ENCODE measurements at regions of chr18 and their contacts with region 1.

Region 1: DNA sequence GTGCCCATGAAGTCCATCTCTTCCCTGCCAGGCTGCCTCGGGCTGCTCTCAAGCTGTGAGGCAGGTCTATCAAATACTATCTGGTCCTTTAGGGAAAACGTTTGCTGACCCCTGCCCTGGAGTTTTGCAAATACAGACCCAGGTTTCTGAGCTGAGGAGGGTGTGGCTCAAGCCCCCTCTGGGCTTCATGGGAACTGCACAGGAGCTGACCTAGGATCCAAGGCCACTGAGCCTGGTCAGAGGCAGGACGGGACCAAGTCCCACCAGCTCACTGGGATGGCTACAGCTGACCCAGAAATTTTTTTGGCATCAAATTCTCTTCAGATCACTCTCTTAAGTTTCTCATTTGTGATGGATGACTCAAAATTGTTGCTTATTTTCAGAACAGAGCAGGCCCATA is 14.1 kb downstream of the ZNF516 start:
- DNase-seq: peak in 2 of 7 donors; percentile 29 to 30
- H3K4me3 ChIP-seq: no peak overlapping the region
- H3K27ac ChIP-seq: no peak overlapping the region
- H3K4me1 ChIP-seq: peaks cover 13 to 38% of the 10 kb centered on the region in 2 donors
- H3K27me3 ChIP-seq: no peaks in the 10 kb centered on the region
- CTCF ChIP-seq: peak in 1 of 6 experiments; percentile 16
- POLR2A ChIP-seq: no peak

Region 2: DNA sequence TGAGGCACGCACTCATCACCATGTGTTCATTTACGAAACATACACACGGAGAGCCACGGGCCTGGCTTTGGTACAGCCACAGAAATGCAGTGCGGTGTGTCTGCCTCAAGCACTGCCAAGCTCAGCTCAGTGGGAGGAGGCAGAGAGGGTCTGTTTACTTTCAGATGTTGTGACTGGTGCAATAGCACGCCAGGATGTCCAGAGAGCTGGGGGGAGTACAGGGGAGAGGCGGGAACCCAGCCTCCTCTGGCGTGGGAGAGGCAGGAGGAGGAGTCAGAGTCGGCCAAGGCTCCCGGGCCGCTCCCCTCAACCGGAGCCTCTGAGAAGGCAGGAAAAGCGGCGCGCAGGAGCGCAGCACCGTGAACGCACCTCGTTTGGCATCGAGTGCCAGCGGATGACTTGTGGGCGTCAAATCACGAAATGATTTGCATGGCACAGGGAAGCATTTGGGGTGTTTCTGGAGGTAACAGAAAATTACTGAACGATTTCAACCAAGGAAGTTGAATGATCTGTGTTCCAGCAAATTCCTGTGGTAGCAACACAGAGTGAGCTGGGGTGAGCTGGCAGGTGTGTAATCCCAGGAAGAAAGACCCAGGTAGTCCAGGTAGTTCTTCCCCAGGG is 128.8 kb before region 1 on chr18:
- intact Hi-C with region 1: no loop called
- DNase-seq: peak in 2 of 7 donors; percentile 13 to 21
- H3K4me3 ChIP-seq: no peak overlapping the region
- H3K27ac ChIP-seq: no peak overlapping the region
- H3K4me1 ChIP-seq: peaks cover 0 to 5% of the 10 kb centered on the region in 2 donors
- H3K27me3 ChIP-seq: no peaks in the 10 kb centered on the region
- CTCF ChIP-seq: no peak
- POLR2A ChIP-seq: no peak

Region 3: DNA sequence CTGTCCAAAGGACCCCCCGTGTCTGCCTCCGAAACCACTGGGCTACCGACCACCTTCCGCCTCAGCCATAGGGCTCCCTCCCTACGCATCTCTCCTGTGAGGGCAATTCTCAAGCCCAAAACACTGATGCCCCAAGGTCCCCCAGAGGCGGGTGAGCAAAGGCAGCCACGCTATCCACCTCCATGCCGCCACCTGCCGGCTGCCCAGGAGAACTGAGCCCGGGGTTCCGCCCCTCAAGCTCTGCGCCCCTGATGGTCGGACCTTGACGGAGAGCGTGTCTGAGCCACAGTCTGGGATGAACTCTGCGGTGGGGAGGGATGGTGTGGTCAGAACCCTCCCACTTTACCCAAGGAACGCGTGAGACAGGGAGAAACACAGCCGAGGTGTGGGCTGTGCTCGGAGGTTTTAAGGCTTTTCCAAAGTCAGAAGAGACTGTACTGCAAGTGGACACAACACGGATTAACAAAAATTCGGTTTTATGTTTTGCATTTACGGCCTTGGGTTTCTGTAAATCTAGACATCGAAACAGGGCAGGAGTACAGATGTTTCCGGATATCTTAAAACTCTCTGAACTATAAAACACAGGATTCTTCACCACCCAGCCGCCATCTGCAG is 100.0 kb before region 1 on chr18:
- intact Hi-C with region 1: no loop called
- DNase-seq: peak in 2 of 7 donors; percentile 23 to 38
- H3K4me3 ChIP-seq: no peak overlapping the region
- H3K27ac ChIP-seq: no peak overlapping the region
- H3K4me1 ChIP-seq: no peaks in the 10 kb centered on the region
- H3K27me3 ChIP-seq: no peaks in the 10 kb centered on the region
- CTCF ChIP-seq: peak in 4 of 6 experiments; percentile 4 to 33 (median 18)
- POLR2A ChIP-seq: no peak

Region 4: DNA sequence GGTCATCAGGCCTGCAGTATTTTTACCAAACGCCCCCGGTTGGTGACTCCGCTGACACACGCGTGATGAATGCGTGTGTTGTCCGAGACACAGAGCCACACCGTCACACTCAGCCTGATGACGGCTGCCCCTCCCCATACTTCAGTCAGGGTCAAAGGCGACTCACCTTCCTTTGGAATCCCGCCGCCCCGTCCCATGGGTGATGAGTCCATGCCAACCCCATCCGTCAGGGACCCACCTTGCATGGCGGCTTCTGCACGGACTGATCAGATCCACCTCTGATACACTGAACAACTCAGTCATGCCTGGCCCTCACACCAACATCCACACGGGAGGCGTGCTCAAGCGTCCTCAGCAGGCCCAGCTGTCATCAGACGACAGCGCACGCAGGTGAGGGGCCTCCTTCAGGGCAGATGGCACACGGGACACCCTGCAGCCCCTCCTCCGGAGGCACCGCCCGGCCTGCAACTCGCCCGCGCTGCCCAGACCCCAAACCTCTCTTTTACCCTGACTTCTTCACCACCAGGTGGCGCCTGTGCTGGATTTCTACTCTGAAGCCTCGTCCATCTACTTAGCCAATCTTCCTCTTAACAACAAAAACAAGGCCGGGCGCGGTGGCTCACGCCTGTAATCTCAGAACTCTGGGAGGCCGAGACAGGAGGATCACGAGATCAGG is 75.1 kb before region 1 on chr18:
- intact Hi-C with region 1: loop called in 1 of 2 experiments (anchors 10 kb)
- DNase-seq: peak in 6 of 7 donors; percentile 53 to 88 (median 72)
- H3K4me3 ChIP-seq: no peak overlapping the region
- H3K27ac ChIP-seq: peak overlapping the region in 1 of 5 donors; percentile 22
- H3K4me1 ChIP-seq: peaks cover 0 to 30% of the 10 kb centered on the region in 2 donors
- H3K27me3 ChIP-seq: no peaks in the 10 kb centered on the region
- CTCF ChIP-seq: peak; percentile 38 to 76 (median 65)
- POLR2A ChIP-seq: no peak

Measured in adrenal gland (tissue), 19 donors.